KBM-7 (cell line): ENCODE measurements at regions of chr17 and their contacts with region 1.

Region 1: GRCh38 chr17:79393358-79394202 is 217.3 kb downstream of the RBFOX3 start:
- DNase-seq: peak; percentile 69

Region 2: DNA sequence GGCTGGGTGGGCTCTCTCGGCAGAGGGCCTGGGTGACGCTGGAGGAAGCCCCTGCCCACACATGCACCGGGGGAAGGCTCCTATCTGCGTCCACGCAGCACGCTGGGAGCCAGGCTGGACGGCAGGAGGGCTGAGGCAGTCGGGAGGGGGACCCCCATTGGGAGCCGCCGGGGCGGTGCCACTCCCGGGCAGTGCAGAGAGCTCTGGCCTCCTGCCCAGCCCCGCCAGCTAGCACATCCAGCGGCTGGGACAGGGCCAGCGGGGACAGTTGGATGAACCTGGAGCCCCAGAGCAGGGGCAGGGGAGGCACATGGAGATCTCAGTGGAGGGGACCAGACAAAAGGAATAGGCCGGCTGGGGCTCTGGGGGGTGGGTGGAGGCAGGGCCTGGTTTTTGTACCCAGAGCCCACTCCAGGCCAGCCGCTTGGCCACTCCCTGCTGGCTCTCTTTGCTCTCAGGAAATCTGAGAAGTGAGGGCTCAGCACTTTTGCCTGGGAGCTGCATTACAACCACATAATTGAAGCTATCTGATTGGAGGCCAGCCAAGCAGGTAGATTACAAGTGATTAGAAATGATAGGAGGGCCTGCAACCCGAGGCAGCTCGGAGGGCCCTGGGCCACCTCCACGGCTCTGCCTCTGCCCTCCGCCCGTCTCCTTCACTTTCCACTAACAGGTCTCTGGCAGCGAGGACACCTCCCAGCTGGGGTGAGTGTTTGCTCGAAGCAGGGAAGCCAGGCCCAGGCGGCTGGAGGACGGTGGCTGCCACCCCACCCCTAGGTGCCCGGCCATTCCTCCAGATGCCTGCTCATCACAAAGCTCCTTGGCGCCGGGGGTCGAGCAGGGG is 278.9 kb before region 1 on chr17:
- in situ Hi-C with region 1: loop called (anchors 25 kb)
- DNase-seq: no peak

Region 3: GRCh38 chr17:79262624-79263023 is 131.0 kb before region 1 on chr17:
- in situ Hi-C with region 1: no loop called
- DNase-seq: no peak